ENCODE measurements at regions of chr1 and their contacts with region 1.

Region 1: GRCh38 chr1:156129706-156130581 is 15.4 kb downstream of the LMNA start:
- DNase-seq: peak; percentile 90
- H3K4me3 ChIP-seq: peak overlapping the region in 1 of 2 experiments; percentile 30; a peak in 1 of 4 replicates
- H3K27ac ChIP-seq: peak overlapping the region; percentile 94 to 100
- H3K4me1 ChIP-seq: peaks cover 46 to 49% of the 10 kb centered on the region in 2 experiments
- H3K27me3 ChIP-seq: no peaks in the 10 kb centered on the region
- CTCF ChIP-seq: peak; percentile 96
- EP300 ChIP-seq: peak in 1 of 2 experiments; percentile 19; a peak in 1 of 4 replicates
- RAD21 ChIP-seq: peak; percentile 96

Region 2: GRCh38 chr1:156114101-156114916 is 15.6 kb before region 1 on chr1 and contains the start of gene LMNA:
- CTCF ChIA-PET with region 1: interaction called, 1,559 read pairs
- POLR2A ChIA-PET with region 1: interaction called, 5 read pairs
- DNase-seq: peak; percentile 87
- H3K4me3 ChIP-seq: peak within 1 kb of the TSS; percentile 74 to 94
- H3K27ac ChIP-seq: peak within 1 kb of the TSS; percentile 93 to 100
- H3K4me1 ChIP-seq: peaks cover 28 to 42% of the 10 kb centered on the region in 2 experiments; a peak in 3 of 4 replicates
- H3K27me3 ChIP-seq: no peaks in the 10 kb centered on the region
- CTCF ChIP-seq: 0 out of 2 replicates have a peak, but pooled peaks have one; percentile 6
- EP300 ChIP-seq: peak in 1 of 2 experiments; percentile 88; a peak in 1 of 4 replicates
- RAD21 ChIP-seq: no peak
- polyA plus RNA-seq, gene LMNA: 726 and 983 TPM in 2 replicates

Region 3: GRCh38 chr1:156212833-156213643 is 83.1 kb after region 1 on chr1 and contains the start of gene PMF1:
- CTCF ChIA-PET with region 1: interaction called, 10 read pairs
- POLR2A ChIA-PET with region 1: no interaction called
- DNase-seq: peak; percentile 98
- H3K4me3 ChIP-seq: peak within 1 kb of the TSS; percentile 67 to 70
- H3K27ac ChIP-seq: peak within 1 kb of the TSS; percentile 94 to 97
- H3K4me1 ChIP-seq: peaks cover 7 to 8% of the 10 kb centered on the region in 2 experiments; a peak in 2 of 4 replicates
- H3K27me3 ChIP-seq: no peaks in the 10 kb centered on the region
- CTCF ChIP-seq: no peak
- EP300 ChIP-seq: 0 out of 4 replicates have a peak, but pooled peaks of 1 of the 2 experiments have one; percentile 13
- RAD21 ChIP-seq: no peak
- polyA plus RNA-seq, gene PMF1: 72.5 and 89.5 TPM in 2 replicates

Region 4: DNA sequence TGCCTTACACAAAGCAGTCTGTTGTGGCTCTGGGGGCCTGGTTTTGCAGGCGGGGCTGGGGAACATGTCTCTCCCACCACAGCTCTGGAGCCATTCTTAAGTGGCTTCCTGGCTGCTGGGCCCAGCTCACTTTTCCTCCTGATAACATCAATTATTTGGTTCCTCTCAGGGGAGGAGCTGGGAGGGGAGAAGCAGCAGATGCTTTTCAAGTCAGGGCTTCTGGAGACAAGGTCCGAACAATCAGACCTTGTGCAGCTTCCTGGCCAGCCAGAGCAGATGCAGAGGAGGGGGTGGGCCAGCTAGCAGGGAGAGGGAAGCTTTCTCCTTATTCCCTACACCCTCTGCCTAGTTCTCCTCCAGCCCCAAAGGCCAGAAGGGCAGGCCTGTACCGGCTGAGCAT is 121.6 kb after region 1 on chr1:
- CTCF ChIA-PET with region 1: interaction called, 14 read pairs
- POLR2A ChIA-PET with region 1: no interaction called
- DNase-seq: peak; percentile 85
- H3K4me3 ChIP-seq: no peak overlapping the region
- H3K27ac ChIP-seq: peak overlapping the region; percentile 16 to 99; a peak in 3 of 4 replicates
- H3K4me1 ChIP-seq: peaks cover 13 to 65% of the 10 kb centered on the region in 2 experiments; a peak in 3 of 4 replicates
- H3K27me3 ChIP-seq: no peaks in the 10 kb centered on the region
- CTCF ChIP-seq: no peak
- EP300 ChIP-seq: peak in 1 of 2 experiments; percentile 87; a peak in 2 of 4 replicates
- RAD21 ChIP-seq: no peak; the same call in 1 of the 2 replicates